Activated CD4-positive, alpha-beta memory T cell treated with anti-CD3 and anti-CD28 coated beads for 36 hours (primary cell): ENCODE measurements at regions of chr19 and their contacts with region 1.

Region 1: DNA sequence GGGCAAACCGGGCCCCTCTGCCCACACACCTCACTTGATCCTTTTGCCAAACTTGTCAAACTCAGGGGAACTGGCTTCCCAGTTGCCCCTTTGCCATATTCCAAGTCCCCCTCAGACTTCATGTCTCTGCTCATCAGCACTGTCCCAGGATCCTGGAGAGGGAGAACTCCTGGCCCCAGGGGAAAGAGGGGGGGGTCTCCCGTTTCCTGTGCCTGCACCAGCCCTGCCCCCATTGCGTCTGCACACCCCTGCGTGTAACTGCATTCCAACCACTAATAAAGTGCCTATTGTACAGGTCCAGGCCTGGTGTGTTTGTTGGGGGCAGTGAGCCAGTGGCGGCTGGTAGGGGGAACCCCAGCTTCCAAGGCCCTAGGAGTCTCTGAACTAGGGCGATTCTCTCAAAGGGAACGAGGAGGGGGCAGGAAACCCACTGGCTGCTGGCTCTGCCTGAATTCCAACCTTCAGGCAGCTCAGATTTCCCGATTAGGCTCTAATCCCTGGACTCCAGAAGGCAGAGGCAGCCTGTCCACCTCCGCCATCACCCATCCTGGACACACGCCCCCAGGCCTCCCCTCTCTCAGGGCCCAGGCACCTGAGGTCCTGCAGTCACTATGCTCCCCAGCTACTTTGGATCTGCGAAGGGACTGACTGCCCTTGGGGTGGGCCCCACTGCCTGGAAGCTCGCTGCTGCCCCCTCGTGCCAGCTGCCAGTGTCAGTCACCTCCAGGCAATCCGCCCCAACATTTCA is 9.7 kb upstream of the ILF3 start:
- DNase-seq: peak; percentile 88
- H3K4me3 Mint-ChIP-seq: no peak overlapping the region
- H3K27ac Mint-ChIP-seq: peak overlapping the region; percentile 59
- H3K4me1 Mint-ChIP-seq: peaks cover 11% of the 10 kb centered on the region
- H3K27me3 Mint-ChIP-seq: no peaks in the 10 kb centered on the region

Region 2: DNA sequence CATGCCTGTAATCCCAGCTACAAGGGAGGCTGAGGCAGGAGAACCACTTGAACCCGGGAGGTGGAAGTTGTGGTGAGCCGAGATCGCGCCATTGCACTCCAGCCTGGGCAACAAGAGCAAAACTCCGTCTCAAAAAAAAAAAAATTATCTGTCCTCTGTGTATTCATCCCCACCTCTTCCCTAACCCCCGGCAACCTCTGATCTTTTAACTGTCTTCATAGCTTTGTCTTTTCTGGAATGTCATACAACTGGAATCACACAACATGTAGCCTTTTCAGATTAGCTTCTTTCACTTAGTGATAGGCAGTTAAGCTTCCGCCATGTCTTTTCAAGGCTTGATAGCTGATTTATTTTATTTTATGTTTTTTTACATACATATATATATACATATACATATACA is 118.8 kb before region 1 on chr19:
- CTCF ChIA-PET with region 1: no interaction called
- POLR2A ChIA-PET with region 1: no interaction called
- intact Hi-C with region 1: no loop called
- DNase-seq: no peak
- H3K4me3 Mint-ChIP-seq: no peak overlapping the region
- H3K27ac Mint-ChIP-seq: no peak overlapping the region
- H3K4me1 Mint-ChIP-seq: no peaks in the 10 kb centered on the region
- H3K27me3 Mint-ChIP-seq: no peaks in the 10 kb centered on the region

Region 3: DNA sequence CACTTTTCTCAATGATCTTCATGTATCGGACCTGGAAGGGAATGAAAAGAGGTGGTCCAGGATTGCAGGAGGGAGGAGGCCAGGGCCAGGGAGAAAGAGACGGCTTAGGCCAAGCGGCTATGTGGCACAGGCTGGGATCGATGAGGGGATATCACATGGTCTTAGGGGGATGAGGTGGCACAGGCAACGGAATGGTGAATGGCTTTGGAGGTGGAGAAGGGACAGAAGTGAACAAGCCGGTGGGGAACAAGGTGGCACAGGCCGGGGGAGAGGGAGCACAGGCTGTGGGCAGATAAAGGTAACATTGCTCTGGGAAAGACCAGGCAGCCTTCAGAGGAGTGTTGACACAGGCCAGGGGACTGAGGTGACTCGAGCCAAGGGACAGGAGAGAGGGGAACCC is 70.0 kb before region 1 on chr19:
- CTCF ChIA-PET with region 1: interaction called, 293 read pairs
- POLR2A ChIA-PET with region 1: no interaction called
- intact Hi-C with region 1: no loop called
- DNase-seq: no peak
- H3K4me3 Mint-ChIP-seq: no peak overlapping the region
- H3K27ac Mint-ChIP-seq: no peak overlapping the region
- H3K4me1 Mint-ChIP-seq: peaks cover 7% of the 10 kb centered on the region
- H3K27me3 Mint-ChIP-seq: no peaks in the 10 kb centered on the region

Region 4: DNA sequence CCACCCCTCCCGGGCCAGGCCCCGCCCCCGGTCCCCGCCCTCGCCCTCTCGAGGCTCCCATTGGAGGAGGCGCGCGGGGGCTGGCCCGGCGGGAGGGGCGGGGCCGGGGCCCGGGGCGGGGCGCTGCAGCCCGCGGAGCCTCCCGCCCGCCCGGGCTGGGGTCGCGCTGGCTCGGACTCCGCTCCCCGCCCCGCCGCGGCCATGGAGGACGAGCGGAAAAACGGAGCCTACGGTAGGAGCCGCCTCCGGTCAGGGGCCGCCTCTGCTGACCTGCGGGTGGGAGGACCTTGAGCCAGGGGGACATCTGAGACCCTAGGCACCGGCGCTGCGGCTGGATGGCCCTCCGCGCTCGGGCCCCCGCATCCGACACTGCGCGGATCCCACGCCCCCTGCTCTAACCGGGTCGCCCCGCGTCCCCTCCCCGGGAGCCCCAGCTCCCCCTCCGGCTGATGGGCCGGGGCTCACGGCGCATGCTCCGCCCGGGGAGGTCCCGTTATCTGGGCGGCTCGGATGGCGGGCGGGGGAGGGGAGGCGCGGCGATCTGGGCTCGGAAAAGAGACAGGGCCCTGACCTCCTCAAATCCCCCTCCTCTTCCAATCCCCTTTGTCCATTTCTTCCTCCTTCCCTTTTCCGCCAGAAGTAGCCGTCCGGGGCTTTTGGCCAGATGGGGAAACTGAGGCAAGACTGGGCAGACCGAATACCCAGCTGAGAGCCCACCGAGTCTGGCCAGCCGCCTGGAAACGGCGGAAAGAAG is 41.9 kb before region 1 on chr19:
- CTCF ChIA-PET with region 1: interaction called, 23 read pairs
- POLR2A ChIA-PET with region 1: interaction called, 3 read pairs
- intact Hi-C with region 1: no loop called
- DNase-seq: peak; percentile 94
- H3K4me3 Mint-ChIP-seq: peak overlapping the region; percentile 88
- H3K27ac Mint-ChIP-seq: peak overlapping the region; percentile 98
- H3K4me1 Mint-ChIP-seq: peaks cover 18% of the 10 kb centered on the region
- H3K27me3 Mint-ChIP-seq: no peaks in the 10 kb centered on the region

Region 5: DNA sequence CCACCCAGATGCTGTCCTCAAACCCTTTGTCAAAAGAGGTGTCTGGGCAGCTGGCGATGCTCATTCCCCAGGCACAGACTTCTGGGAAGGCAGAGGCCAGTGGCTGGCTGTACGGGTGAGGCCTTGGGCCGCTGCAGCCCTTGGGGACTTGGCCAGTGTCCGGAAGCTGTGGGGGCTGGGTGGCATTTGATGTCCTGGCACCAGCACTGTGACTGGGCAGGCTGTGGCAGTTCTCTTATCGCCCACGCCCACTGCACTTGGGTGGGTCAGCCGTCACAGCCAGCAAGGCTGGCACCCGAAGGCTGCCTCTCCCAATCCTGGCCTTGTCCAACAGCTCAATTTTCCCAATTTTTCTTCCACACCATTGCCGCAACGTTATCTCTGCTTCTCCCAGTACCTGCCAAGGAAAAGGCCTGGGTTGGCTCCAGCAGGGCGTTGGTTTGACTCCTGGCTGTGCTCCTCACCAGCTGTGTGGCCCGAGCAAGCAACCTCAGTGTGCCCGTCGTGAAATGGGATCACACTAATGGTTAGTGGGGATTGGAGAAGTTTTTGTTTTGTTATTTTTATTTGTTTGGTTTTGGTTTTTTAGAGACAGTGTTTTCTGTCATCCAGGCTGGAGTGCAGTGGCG is 31.8 kb before region 1 on chr19:
- CTCF ChIA-PET with region 1: interaction called, 11 read pairs
- POLR2A ChIA-PET with region 1: interaction called, 3 read pairs
- intact Hi-C with region 1: no loop called
- DNase-seq: no peak
- H3K4me3 Mint-ChIP-seq: no peak overlapping the region
- H3K27ac Mint-ChIP-seq: no peak overlapping the region
- H3K4me1 Mint-ChIP-seq: peaks cover 24% of the 10 kb centered on the region
- H3K27me3 Mint-ChIP-seq: no peaks in the 10 kb centered on the region